Activated CD4-positive, alpha-beta T cell treated with anti-CD3 and anti-CD28 coated beads for 36 hours (primary cell): ENCODE measurements at regions of chr5 and their contacts with region 1.

Region 1: DNA sequence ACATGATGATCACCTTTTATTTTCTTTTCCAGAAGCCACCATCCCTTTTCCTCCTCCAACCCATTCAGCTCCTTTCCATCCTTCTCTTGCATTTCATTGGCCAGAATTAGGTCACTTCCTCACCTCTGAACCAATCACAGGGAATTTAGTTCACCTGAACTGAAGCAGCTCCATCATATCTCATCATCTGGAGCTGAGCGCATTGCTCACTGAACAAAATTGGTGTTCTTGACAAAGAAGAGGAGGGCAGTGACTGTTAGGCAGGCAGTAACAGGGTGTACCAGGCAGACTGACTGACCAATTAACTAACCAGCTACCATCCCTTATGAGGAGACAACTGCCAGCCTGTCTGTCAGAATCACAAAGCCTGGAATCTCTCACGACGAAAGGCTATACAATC is 1.8 kb upstream of the ZNF354A start:
- DNase-seq: no peak
- ATAC-seq: no peak
- H3K4me3 Mint-ChIP-seq: no peak overlapping the region
- H3K27ac Mint-ChIP-seq: no peak overlapping the region
- H3K4me1 Mint-ChIP-seq: peaks cover 10% of the 10 kb centered on the region
- H3K27me3 Mint-ChIP-seq: no peaks in the 10 kb centered on the region

Region 2: DNA sequence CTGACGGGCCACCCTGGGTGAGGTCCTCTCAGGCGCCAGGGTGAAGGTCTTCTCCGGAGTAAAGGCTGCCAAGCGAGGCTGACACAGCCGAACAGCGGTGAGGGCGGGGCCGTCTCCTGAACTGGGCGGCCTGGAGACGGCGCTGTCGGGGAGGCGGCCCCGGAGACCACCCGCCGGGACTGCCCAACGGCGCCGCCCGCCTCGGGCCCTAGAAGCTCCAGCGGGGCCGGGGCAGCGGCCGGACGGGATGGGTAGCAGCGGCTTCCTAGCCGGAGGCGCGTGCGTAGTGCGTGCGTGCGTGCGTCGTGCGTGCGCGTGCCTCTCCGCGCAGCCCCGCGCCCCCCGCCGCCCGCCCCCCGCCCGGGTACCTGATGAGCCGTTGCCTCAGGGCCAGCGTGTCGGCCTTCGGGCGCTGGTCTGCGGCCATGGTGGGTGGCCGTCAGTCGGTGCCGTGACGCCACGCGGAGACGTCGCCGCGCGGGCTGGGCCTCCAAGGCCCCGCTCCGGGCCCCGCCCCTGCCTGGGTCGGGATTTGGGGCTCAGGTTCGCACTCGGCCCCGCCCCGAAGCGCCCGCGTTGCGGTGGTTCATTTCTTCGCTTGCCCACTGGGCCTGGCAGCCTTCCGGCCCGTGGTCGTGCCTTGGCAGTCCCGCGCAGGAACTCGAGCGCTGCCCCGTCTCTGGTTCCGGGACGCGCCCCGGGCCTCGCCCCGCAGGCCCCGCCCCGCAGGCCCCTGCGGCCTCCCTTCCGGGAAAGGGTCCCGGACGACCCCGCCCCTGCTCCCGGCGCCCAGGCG is 500.0 kb before region 1 on chr5 and contains the start of gene PHYKPL:
- CTCF ChIA-PET with region 1: no interaction called
- POLR2A ChIA-PET with region 1: no interaction called
- intact Hi-C with region 1: loop called in 1 of 2 experiments (anchors 1 kb)
- DNase-seq: peak; percentile 81
- ATAC-seq: peak; percentile 70
- H3K4me3 Mint-ChIP-seq: peak within 1 kb of the TSS; percentile 80
- H3K27ac Mint-ChIP-seq: peak within 1 kb of the TSS; percentile 84
- H3K4me1 Mint-ChIP-seq: peaks cover 56% of the 10 kb centered on the region
- H3K27me3 Mint-ChIP-seq: no peaks in the 10 kb centered on the region
- total RNA-seq, gene PHYKPL: 67.2 to 68.4 TPM

Region 3: GRCh38 chr5:178808886-178809285 is 76.6 kb after region 1 on chr5:
- CTCF ChIA-PET with region 1: no interaction called
- POLR2A ChIA-PET with region 1: no interaction called
- intact Hi-C with region 1: no loop called
- DNase-seq: no peak
- ATAC-seq: no peak
- H3K4me3 Mint-ChIP-seq: no peak overlapping the region
- H3K27ac Mint-ChIP-seq: no peak overlapping the region
- H3K4me1 Mint-ChIP-seq: no peaks in the 10 kb centered on the region
- H3K27me3 Mint-ChIP-seq: peaks cover 21% of the 10 kb centered on the region

Region 4: DNA sequence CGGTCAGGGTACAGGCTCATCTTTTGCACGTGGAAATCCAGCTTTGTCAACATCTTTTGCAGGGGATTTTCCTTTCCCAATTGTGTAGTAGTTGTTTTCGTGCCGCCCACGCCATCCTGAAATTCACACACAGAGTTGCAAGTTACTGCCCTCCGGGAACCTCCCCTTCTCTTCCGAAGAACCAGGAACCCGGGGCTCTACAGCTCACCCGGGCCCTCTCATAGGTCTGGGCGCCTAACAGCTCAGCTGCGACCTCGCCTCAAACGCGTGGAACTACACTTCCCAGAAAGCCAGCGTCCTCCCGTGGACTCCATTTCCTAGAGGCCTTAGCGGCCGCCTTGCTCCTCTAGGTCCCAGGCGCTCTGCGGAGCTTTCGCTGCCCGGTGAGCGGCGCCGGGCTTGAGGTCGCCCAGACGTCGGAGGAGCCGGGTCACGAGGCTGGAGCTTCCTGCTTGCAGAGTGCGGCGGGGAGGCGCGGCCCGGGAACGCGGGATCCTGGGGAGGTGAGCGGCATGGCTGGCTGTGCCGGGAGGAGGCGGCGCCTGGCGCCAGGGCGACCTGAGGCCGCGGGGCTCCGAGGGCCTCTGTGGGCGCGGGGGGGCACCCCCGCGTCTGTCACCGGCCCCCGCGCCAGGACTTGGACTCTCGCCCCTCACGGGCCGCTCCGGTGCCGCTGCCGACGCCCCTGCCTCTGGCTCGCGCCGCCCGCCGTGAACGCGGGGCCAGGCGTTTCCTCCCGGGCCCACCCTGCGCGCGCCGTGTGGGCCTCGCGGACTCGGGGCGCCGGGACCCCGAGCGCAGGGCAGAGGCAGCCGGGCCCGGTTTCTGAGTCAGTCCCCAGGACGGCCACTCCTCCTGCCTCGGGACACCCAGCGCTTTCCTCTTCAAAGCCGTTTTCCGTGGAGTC is 127.6 kb after region 1 on chr5 and contains the start of gene ZNF354B:
- CTCF ChIA-PET with region 1: interaction called, 15 read pairs
- POLR2A ChIA-PET with region 1: interaction called, 4 read pairs
- intact Hi-C with region 1: loop called (anchors 1 kb)
- DNase-seq: peak; percentile 93
- ATAC-seq: peak; percentile 100
- H3K4me3 Mint-ChIP-seq: peak within 1 kb of the TSS; percentile 79
- H3K27ac Mint-ChIP-seq: peak within 1 kb of the TSS; percentile 89
- H3K4me1 Mint-ChIP-seq: peaks cover 24% of the 10 kb centered on the region
- H3K27me3 Mint-ChIP-seq: no peaks in the 10 kb centered on the region
- total RNA-seq, gene ZNF354B: 10.8 to 11.9 TPM

Region 5: GRCh38 chr5:179023528-179024430 is 291.5 kb after region 1 on chr5 and contains the start of gene ZNF879:
- CTCF ChIA-PET with region 1: interaction called, 4 read pairs
- POLR2A ChIA-PET with region 1: no interaction called
- intact Hi-C with region 1: loop called in 1 of 2 experiments (anchors 1 kb)
- DNase-seq: peak; percentile 96
- ATAC-seq: peak; percentile 97
- H3K4me3 Mint-ChIP-seq: peak within 1 kb of the TSS; percentile 77
- H3K27ac Mint-ChIP-seq: peak within 1 kb of the TSS; percentile 89
- H3K4me1 Mint-ChIP-seq: peaks cover 11% of the 10 kb centered on the region
- H3K27me3 Mint-ChIP-seq: no peaks in the 10 kb centered on the region
- total RNA-seq, gene ZNF879: 2.1 to 3.2 TPM

Region 6: DNA sequence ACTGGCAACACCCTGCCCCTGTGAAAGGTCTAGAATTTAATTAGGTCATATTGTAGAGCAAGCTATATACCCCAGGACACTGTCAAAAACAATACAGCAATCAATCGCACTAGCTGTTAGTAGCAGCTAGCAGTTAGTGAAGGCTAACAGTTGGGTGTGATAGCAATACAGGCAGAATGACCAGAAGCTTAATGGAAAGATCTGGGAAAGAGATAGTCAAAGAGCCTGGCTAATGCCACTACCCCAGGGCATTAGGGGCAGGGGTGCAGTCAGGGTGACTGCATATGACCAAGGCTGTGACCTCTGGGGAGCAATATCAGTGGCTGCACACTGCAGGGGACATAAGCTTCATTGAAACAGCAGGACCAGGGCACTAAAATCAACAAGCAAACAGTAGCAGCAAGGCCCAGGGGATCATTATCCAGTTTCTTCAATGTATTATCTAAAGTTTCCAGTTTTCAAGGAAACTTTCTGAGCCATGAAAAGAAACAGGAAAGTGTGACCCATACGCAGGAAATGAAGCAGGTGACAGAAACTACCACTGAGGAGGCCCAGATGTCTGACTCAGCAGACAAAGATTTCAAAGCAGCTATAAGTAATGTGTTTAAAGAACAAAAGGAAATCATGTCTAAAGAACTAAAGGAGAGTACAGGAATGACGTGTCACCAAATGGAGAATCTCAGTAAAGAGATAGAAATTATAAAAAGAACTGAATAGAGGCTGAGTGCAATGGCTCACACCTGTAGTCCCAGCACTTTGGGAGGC is 410.3 kb after region 1 on chr5:
- CTCF ChIA-PET with region 1: no interaction called
- POLR2A ChIA-PET with region 1: no interaction called
- intact Hi-C with region 1: loop called in 1 of 2 experiments (anchors 1 kb)
- DNase-seq: peak; percentile 67
- ATAC-seq: peak; percentile 87
- H3K4me3 Mint-ChIP-seq: no peak overlapping the region
- H3K27ac Mint-ChIP-seq: peak overlapping the region; percentile 88
- H3K4me1 Mint-ChIP-seq: peaks cover 37% of the 10 kb centered on the region
- H3K27me3 Mint-ChIP-seq: no peaks in the 10 kb centered on the region